ENCODE measurements at regions of chr9 and their contacts with region 1.

Region 1: GRCh38 chr9:105881654-105882349 is 187.5 kb downstream of the TMEM38B start:
- DNase-seq: peak; percentile 78
- H3K4me3 Mint-ChIP-seq: no peak overlapping the region
- H3K27ac Mint-ChIP-seq: no peak overlapping the region
- H3K4me1 Mint-ChIP-seq: peaks cover 42% of the 10 kb centered on the region
- H3K27me3 Mint-ChIP-seq: peaks cover 37% of the 10 kb centered on the region

Region 2: DNA sequence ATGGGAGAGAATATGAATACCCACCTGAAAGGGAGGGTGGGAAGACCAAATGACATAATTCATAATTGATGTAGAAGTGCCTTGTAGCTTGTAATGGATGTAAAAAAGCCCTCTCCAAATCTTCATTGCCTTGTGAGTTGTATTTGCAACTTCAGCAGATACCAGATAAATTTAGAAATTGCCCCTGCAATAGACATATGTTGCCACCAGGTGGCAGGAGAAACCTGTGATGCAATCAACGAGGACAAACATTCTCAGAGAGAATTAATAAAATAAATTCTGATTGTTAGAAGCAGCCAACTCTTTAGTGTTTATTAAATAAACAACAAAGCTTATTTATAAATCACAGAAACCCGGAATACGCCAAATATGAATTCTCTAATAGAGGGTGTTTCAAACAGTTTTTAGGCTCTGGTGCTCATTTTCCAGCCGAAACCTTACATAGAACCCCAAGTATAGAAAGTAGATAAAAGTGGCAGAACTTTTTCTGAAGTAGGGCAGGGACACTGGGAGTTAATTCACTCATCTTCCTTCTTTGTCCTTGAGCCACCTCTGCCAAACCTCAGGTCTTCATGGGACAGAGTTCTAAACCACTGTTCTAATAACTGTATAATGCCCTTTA is 39.7 kb before region 1 on chr9:
- CTCF ChIA-PET with region 1: interaction called, 10 read pairs
- POLR2A ChIA-PET with region 1: no interaction called
- DNase-seq: peak; percentile 50
- H3K4me3 Mint-ChIP-seq: no peak overlapping the region
- H3K27ac Mint-ChIP-seq: no peak overlapping the region
- H3K4me1 Mint-ChIP-seq: no peaks in the 10 kb centered on the region
- H3K27me3 Mint-ChIP-seq: no peaks in the 10 kb centered on the region

Region 3: GRCh38 chr9:106207298-106207697 is 325.5 kb after region 1 on chr9:
- CTCF ChIA-PET with region 1: no interaction called
- POLR2A ChIA-PET with region 1: no interaction called
- DNase-seq: no peak
- H3K4me3 Mint-ChIP-seq: no peak overlapping the region
- H3K27ac Mint-ChIP-seq: no peak overlapping the region
- H3K4me1 Mint-ChIP-seq: no peaks in the 10 kb centered on the region
- H3K27me3 Mint-ChIP-seq: no peaks in the 10 kb centered on the region

Measured in activated CD4-positive, alpha-beta T cell treated with anti-CD3 and anti-CD28 coated beads, Interleukin-2, amount 10 ng/mL, durations not matched to agents 7 days and 5 days (primary cell).